Aorta (tissue), 5 donors: ENCODE measurements at regions of chr22 and their contacts with region 1.

Region 1: GRCh38 chr22:35299673-35300497 is at the start of gene TOM1:
- DNase-seq: peak; percentile 98 to 99
- ATAC-seq: peak; percentile 97
- H3K4me3 ChIP-seq: peak within 1 kb of the TSS; percentile 67 to 80
- H3K27ac ChIP-seq: peak within 1 kb of the TSS; percentile 81 to 84
- H3K4me1 ChIP-seq: no peaks in the 10 kb centered on the region
- H3K27me3 ChIP-seq: no peaks in the 10 kb centered on the region
- total RNA-seq, gene TOM1: 49.5 to 50.5 TPM

Region 2: DNA sequence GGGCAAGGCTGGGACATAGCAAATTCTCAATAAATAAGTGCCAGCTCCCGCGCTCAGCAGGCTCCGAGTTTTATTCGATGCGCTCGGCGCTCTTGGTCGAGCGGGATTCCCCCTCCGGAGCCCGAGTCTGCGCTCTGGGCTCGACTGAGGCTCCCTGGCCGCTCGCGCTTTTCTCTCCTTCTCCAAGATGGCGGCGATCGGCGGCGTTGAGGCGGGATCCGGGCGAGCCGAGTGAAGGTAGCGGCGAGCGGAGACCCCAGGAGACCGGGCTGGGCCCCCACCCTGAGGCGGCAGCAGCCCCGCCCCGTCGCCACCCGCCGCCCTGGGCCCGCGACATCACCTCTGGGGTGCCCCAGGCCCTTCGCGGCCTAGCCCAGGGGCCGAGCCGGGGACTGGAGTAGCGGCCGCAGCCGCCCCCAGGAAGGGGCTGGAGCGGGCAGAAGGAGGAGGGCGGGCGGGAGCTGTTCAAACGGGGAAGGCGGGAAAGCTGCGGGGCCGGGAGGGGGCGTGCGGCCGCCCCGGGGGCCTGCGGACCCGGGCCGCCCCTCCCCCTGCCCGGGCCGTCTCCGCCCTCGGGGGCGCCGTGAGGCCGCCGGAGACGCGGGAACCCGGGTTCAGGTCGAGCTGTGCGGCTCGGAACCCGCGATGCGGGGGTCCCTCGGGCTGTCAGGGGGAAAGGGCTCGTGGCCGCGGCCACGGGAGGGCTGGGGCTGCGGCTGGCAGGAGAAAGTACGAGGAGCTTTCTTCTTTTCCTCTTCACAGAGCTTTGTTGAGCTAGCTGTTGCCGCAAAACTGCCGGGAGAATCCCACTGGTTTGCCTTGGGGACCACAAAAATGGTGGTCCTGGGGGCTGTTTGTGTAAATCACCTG is 42.3 kb before region 1 on chr22 and contains the start of gene HMGXB4:
- intact Hi-C with region 1: loop called in 1 of 2 experiments (anchors 2 kb)
- DNase-seq: peak; percentile 94 to 96
- ATAC-seq: peak; percentile 98
- H3K4me3 ChIP-seq: peak within 1 kb of the TSS; percentile 88 to 91
- H3K27ac ChIP-seq: peak within 1 kb of the TSS; percentile 55 to 62
- H3K4me1 ChIP-seq: peaks cover 0 to 2% of the 10 kb centered on the region in 2 donors
- H3K27me3 ChIP-seq: no peaks in the 10 kb centered on the region
- total RNA-seq, gene HMGXB4: 15.3 to 16.0 TPM

Region 3: DNA sequence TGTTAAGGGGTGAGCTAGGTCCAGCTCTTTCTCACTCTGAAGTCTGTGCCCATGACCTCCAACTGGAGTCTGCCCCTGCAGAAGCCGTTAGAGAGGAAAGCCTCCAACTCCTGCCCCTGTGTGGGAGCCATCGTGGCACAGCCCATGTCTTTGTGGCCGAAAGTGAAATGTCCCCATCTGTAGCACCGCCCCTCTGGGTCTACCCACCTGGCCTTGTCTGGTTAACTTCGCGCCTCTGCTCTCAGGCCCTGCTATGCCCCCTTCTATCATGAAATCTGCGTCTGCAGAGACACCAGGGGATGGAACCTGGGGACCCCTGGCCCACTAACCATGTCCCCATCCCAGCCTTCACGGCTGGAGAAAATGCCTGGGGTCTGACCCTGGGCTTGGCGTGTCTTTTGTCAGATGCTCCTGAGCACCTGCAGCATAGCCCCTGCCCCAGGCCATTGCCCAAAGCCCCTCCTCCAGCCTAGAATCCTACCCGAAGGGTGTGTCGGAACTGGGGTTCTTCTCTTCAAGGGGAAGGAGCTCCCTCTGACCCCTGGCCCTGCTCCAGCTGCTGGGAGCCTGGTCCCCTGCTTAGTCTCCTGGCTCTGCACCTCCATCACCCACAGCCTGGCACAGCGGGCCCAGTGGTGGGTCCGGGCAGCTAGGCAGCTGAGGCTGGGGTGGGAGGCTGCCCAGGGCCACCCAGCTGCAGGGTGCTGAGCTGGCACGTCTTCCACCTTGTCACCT is 45.2 kb after region 1 on chr22:
- intact Hi-C with region 1: no loop called
- DNase-seq: no peak
- ATAC-seq: no peak
- H3K4me3 ChIP-seq: no peak overlapping the region
- H3K27ac ChIP-seq: no peak overlapping the region
- H3K4me1 ChIP-seq: no peaks in the 10 kb centered on the region
- H3K27me3 ChIP-seq: no peaks in the 10 kb centered on the region

Region 4: GRCh38 chr22:36775964-36776669 is 1476.2 kb after region 1 on chr22 and contains the start of gene IFT27:
- intact Hi-C with region 1: loop called in 1 of 2 experiments (anchors 5 kb)
- DNase-seq: peak; percentile 97 to 99
- ATAC-seq: peak; percentile 98
- H3K4me3 ChIP-seq: peak within 1 kb of the TSS; percentile 52 to 76
- H3K27ac ChIP-seq: no peak within 1 kb of the TSS
- H3K4me1 ChIP-seq: peaks cover 0 to 6% of the 10 kb centered on the region in 2 donors
- H3K27me3 ChIP-seq: no peaks in the 10 kb centered on the region
- total RNA-seq, gene IFT27: 16.1 to 27.4 TPM